Activated CD8-positive, alpha-beta T cell treated with anti-CD3 and anti-CD28 coated beads, Interleukin-2, amount 10 ng/mL, durations not matched to agents 7 days and 5 days (primary cell): ENCODE measurements at regions of chr5 and their contacts with region 1.

Region 1: GRCh38 chr5:157189223-157189622 is 8.6 kb downstream of the ITK start:
- DNase-seq: peak; percentile 41
- ATAC-seq: no peak
- H3K4me3 Mint-ChIP-seq: peak overlapping the region; percentile 99
- H3K27ac Mint-ChIP-seq: peak overlapping the region; percentile 82
- H3K4me1 Mint-ChIP-seq: peaks cover 79% of the 10 kb centered on the region
- H3K27me3 Mint-ChIP-seq: no peaks in the 10 kb centered on the region

Region 2: GRCh38 chr5:157157293-157157891 is 31.8 kb before region 1 on chr5:
- CTCF ChIA-PET with region 1: interaction called, 162 read pairs
- POLR2A ChIA-PET with region 1: interaction called, 26 read pairs
- DNase-seq: peak; percentile 18
- ATAC-seq: no peak
- H3K4me3 Mint-ChIP-seq: no peak overlapping the region
- H3K27ac Mint-ChIP-seq: no peak overlapping the region
- H3K4me1 Mint-ChIP-seq: peaks cover 68% of the 10 kb centered on the region
- H3K27me3 Mint-ChIP-seq: no peaks in the 10 kb centered on the region

Region 3: DNA sequence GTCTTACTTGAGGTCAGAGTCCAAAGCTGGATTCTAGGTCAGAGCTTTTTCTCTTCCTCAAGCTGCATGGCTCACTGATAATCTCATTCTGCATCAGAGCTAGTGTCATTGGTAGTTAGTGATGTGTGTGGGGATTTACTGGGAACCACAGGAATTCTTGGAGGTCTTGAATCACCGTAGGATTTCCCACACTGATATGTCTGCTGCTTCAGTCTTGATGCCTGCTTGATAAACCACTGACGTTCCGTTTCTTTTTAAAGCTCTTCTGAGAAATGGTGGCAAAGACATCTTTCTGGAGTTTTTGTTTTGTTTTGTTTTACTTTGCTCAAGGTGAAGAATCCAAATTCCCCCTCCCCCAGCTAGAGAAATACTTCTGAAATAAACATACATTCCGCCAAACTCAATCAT is 22.0 kb before region 1 on chr5:
- CTCF ChIA-PET with region 1: interaction called, 9 read pairs
- POLR2A ChIA-PET with region 1: interaction called, 22 read pairs
- DNase-seq: peak; percentile 26
- ATAC-seq: peak; percentile 45
- H3K4me3 Mint-ChIP-seq: peak overlapping the region; percentile 69
- H3K27ac Mint-ChIP-seq: peak overlapping the region; percentile 85
- H3K4me1 Mint-ChIP-seq: peaks cover 67% of the 10 kb centered on the region
- H3K27me3 Mint-ChIP-seq: no peaks in the 10 kb centered on the region

Region 4: DNA sequence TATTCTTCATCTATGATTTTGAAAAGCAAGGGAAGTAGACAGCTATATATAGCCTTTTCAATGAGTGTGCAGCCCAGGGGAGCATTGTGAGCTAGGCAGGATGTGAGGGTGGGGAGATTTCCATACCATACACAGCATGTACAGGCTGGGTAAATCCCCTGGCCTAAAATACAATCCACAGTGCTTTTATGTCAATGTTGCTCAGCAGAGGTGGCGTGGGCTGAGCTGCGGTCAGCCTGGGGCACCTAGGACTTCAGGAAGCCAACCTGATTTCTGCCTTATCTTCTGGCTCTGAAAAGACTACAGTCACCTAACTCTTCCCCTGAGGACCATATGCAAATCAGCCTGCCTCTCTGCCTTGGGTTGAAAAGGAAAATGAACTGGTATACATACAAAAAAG is 16.8 kb before region 1 on chr5:
- CTCF ChIA-PET with region 1: interaction called, 9 read pairs
- POLR2A ChIA-PET with region 1: interaction called, 22 read pairs
- DNase-seq: peak; percentile 88
- ATAC-seq: peak; percentile 97
- H3K4me3 Mint-ChIP-seq: peak overlapping the region; percentile 60
- H3K27ac Mint-ChIP-seq: peak overlapping the region; percentile 90
- H3K4me1 Mint-ChIP-seq: peaks cover 81% of the 10 kb centered on the region
- H3K27me3 Mint-ChIP-seq: no peaks in the 10 kb centered on the region

Region 5: GRCh38 chr5:157204765-157205164 is 15.5 kb after region 1 on chr5:
- CTCF ChIA-PET with region 1: interaction called, 17 read pairs
- POLR2A ChIA-PET with region 1: interaction called, 176 read pairs
- DNase-seq: no peak
- ATAC-seq: peak; percentile 28
- H3K4me3 Mint-ChIP-seq: peak overlapping the region; percentile 13
- H3K27ac Mint-ChIP-seq: peak overlapping the region; percentile 68
- H3K4me1 Mint-ChIP-seq: peaks cover 87% of the 10 kb centered on the region
- H3K27me3 Mint-ChIP-seq: no peaks in the 10 kb centered on the region